ENCODE measurements at regions of chr21 and their contacts with region 1.

Region 1: GRCh38 chr21:33127154-33127893 is 57.4 kb downstream of the OLIG1 start:
- DNase-seq: peak; percentile 70
- H3K4me3 ChIP-seq: no peak overlapping the region
- H3K27ac ChIP-seq: no peak overlapping the region
- H3K4me1 ChIP-seq: no peaks in the 10 kb centered on the region
- H3K27me3 ChIP-seq: peaks cover 10 to 18% of the 10 kb centered on the region in 2 experiments
- CTCF ChIP-seq: peak; percentile 88
- POLR2A ChIP-seq: no peak

Region 2: DNA sequence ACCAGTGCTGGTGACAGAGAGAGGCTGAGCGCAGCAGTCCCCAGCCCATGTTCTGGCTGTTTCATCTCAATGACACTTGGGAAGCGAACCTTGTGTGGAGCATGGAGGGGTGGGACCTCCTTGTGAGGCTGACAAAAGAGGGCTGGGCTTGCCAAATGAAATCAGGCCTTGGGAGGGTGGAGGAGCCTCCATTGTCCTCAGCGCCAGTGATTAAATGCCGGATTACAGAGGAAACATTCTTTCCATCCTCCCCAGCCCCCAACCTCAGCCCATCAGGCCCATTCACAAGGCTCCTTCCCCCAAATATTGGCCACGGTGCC is 292.4 kb before region 1 on chr21:
- CTCF ChIA-PET with region 1: interaction called, 14 read pairs
- POLR2A ChIA-PET with region 1: no interaction called
- dilution Hi-C with region 1: no loop called
- intact Hi-C with region 1: loop called (anchors 5 kb)
- DNase-seq: no peak
- H3K4me3 ChIP-seq: no peak overlapping the region
- H3K27ac ChIP-seq: no peak overlapping the region
- H3K4me1 ChIP-seq: no peaks in the 10 kb centered on the region
- H3K27me3 ChIP-seq: peaks cover 8 to 36% of the 10 kb centered on the region in 2 experiments
- CTCF ChIP-seq: no peak
- POLR2A ChIP-seq: no peak

Region 3: DNA sequence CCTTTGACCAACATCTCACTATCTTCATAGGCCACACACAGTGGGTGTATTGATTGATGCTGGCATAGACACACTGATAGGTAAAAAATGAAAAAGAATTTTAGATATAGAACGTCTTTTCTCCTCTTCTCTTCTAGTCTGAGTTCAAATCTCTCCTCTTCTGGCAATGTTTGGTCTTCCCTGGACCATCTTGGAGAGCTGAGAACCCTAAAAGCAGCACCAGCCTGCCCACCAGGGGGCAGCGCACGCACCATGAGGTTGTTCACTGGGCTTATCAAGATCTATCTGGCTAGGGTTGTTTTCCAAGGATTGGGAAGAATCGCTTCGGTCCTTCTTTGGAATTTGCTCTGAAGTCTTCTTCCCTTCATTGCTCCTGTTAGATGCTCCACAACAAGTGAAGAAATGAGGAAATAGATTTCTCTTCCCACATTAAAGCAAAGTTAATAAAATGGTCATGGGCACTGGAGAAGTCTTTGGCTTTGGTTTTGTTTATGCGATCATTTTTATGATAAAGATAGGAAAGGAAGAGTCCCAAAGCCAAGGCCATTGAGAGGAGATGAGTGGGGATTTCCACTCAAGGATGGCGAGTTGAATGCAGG is 205.6 kb before region 1 on chr21:
- CTCF ChIA-PET with region 1: interaction called, 18 read pairs
- POLR2A ChIA-PET with region 1: no interaction called
- dilution Hi-C with region 1: no loop called
- intact Hi-C with region 1: loop called (anchors 1 kb)
- DNase-seq: peak; percentile 6
- H3K4me3 ChIP-seq: no peak overlapping the region
- H3K27ac ChIP-seq: no peak overlapping the region
- H3K4me1 ChIP-seq: no peaks in the 10 kb centered on the region
- H3K27me3 ChIP-seq: peaks cover 4 to 7% of the 10 kb centered on the region in 2 experiments
- CTCF ChIP-seq: peak; percentile 61 to 65
- POLR2A ChIP-seq: no peak

Region 4: DNA sequence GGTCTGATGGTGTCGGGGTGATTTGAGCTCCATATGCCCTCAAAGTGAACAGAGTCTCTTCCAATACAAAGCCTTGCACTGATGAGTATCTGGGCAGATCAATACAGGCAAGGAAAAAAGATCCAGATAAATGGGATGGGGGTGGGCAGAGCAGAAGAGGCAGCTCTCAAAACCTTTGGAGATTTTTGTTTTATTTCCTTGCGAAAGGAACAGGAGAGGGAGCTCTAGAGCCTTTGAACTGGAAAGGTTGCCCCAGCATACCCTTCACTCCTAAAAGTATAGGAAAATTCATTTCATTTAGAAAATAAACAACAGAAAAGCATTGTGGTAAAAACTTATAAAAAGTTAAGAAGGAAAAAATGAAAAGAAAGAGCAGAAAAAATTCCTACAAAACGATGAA is 133.0 kb before region 1 on chr21:
- CTCF ChIA-PET with region 1: interaction called, 279 read pairs
- POLR2A ChIA-PET with region 1: no interaction called
- dilution Hi-C with region 1: no loop called
- intact Hi-C with region 1: loop called (anchors 1 kb)
- DNase-seq: peak; percentile 27
- H3K4me3 ChIP-seq: no peak overlapping the region
- H3K27ac ChIP-seq: no peak overlapping the region
- H3K4me1 ChIP-seq: no peaks in the 10 kb centered on the region
- H3K27me3 ChIP-seq: peaks cover 17 to 37% of the 10 kb centered on the region in 2 experiments
- CTCF ChIP-seq: peak; percentile 38 to 44
- POLR2A ChIP-seq: no peak

Region 5: DNA sequence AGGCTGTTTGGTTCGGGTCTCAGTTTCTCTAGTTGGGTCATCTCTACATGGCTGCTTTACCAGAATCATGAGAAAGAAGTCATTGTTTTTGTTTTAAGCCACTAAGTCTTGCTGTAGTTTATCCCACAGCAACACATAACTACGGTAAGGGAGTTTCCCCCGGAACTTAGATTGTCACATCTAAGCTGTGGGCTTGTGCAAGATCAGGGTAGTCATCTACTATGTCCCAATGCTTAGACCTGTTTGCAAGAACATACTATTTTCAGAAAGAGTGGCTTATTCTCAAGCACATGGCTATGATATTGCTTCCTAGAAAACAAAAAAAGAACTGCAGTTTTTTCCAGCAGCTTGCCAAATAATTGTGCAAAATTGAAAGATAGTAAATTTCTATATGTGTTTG is 119.6 kb before region 1 on chr21:
- CTCF ChIA-PET with region 1: interaction called, 15 read pairs
- POLR2A ChIA-PET with region 1: no interaction called
- dilution Hi-C with region 1: no loop called
- intact Hi-C with region 1: no loop called
- DNase-seq: no peak
- H3K4me3 ChIP-seq: no peak overlapping the region
- H3K27ac ChIP-seq: no peak overlapping the region
- H3K4me1 ChIP-seq: no peaks in the 10 kb centered on the region
- H3K27me3 ChIP-seq: peaks cover 17 to 19% of the 10 kb centered on the region in 2 experiments
- CTCF ChIP-seq: no peak
- POLR2A ChIP-seq: no peak

Region 6: DNA sequence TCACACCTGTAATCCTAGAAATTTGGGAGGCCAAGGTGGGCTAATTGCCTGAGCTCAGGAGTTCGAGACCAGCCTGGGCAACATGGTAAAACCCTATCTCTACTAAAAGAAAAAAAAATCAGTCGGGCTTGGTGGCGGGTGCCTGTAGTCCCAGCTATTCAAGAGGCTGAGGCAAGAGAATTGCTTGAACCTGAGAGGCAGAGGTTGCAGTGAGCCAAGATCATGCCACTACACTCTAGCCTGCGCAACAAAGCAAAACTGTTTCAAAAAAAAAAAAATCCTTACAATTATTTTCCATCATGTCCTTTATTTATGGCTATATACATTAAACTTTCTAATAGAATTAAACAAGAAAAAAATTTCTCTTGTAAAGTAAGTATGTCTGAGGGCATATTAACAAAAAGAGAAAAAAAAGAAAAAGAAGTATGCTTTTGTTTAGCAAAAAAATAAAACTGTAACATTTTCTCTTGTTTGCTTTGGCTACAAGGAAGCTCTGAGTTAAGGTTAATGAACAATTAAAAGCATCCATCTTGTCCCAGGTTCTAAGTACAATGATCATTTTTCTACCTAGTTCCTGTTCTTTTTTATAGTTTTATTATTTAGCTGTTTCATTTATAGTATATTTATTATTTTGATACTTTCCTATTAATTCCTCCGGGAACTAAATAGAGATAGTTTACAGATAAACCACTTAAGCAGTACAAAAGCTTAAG is 334.4 kb after region 1 on chr21:
- CTCF ChIA-PET with region 1: no interaction called
- POLR2A ChIA-PET with region 1: no interaction called
- dilution Hi-C with region 1: no loop called
- intact Hi-C with region 1: no loop called
- DNase-seq: no peak
- H3K4me3 ChIP-seq: no peak overlapping the region
- H3K27ac ChIP-seq: no peak overlapping the region
- H3K4me1 ChIP-seq: no peaks in the 10 kb centered on the region
- H3K27me3 ChIP-seq: no peaks in the 10 kb centered on the region
- CTCF ChIP-seq: no peak
- POLR2A ChIP-seq: no peak

Measured in endothelial cell of umbilical vein (primary cell).